HCT116 (cell line): ENCODE measurements at regions of chr12 and their contacts with region 1.

Region 1: GRCh38 chr12:38906482-38907170 is 1.2 kb upstream of the CPNE8 start:
- DNase-seq: peak; percentile 74
- ATAC-seq: peak; percentile 73
- H3K4me3 ChIP-seq: peak overlapping the region; percentile 80 to 83
- H3K27ac ChIP-seq: peak overlapping the region; percentile 95
- H3K4me1 ChIP-seq: peaks cover 7 to 27% of the 10 kb centered on the region in 2 experiments
- H3K27me3 ChIP-seq: no peaks in the 10 kb centered on the region
- CTCF ChIP-seq: peak; percentile 61 to 94 (median 82)
- POLR2A ChIP-seq: no peak
- RAD21 ChIP-seq: peak; percentile 72

Region 2: DNA sequence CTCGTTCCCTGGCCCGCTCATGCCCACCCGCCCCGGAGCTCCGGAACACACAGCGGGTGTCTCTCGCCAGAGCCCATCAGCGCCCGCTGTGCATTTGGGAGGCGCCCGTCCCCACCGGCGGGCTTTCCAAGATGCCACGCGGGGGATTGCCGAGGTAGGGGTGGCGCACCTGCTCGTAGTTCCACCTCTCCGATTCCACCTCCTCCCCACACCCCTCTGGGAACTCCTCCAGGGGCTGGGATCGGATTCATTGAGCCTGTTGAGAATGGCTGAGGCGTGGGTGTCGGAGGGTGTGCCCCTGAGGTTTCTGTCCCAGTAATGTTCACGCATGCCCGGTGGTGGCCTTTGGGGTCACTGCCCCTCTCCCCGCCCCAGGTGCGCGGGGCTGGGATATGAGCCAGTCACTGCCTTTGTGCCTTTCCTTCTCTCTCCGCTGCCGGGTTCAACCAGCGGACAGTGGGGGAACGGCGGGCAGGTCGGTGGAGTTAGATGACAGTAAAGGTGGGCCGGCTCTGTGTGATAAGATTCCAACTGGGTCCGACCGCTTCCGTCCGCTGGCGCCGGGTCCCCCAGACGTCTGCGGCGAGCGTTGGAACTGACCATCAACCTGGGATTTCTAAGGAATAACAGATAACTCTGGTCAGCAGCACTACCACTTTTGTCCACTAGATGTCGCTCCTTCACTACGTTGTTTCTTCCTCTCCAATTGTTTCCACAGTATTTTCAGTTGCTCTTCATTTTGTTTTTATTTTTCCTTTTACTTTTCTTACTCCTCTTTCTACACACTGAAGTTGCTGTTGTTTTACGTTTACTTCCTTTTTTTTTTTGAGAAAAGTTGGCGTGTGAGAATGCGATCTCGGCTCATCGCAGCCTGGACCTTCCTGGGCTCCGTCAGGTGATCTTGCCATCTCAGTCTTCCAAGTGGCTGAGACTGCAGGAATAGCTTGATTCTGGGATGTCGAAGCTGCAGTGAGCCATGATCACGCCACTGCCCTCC is 768.1 kb before region 1 on chr12:
- CTCF ChIA-PET with region 1: no interaction called
- POLR2A ChIA-PET with region 1: no interaction called
- RAD21 ChIA-PET with region 1: no interaction called
- intact Hi-C with region 1: loop called (anchors 5 kb)
- DNase-seq: peak; percentile 61
- ATAC-seq: peak; percentile 91
- H3K4me3 ChIP-seq: peak overlapping the region; percentile 45 to 63
- H3K27ac ChIP-seq: peak overlapping the region; percentile 26; the same call in 1 of the 2 replicates
- H3K4me1 ChIP-seq: peaks cover 0 to 5% of the 10 kb centered on the region in 2 experiments; a peak in 1 of 4 replicates
- H3K27me3 ChIP-seq: no peaks in the 10 kb centered on the region
- CTCF ChIP-seq: peak; percentile 83 to 97 (median 85)
- POLR2A ChIP-seq: no peak
- RAD21 ChIP-seq: peak; percentile 90

Region 3: DNA sequence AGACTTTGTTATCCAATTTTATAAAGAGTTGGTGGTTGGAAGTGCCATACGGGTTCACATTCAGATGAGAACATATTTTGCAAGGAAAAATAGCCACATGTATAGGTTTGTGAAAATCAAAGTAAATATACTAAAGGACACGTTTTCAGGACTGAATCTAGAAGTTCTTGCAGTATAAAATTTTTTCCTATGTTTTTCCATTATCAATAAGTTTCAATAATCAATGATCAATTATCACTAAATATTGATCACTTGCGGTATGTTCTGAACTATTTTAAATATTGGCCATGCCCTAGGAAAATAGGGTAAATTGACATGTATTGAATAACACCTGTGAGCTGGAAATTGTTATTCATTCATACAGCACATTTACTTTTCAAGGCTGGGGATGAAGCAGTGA is 564.2 kb before region 1 on chr12:
- CTCF ChIA-PET with region 1: no interaction called
- POLR2A ChIA-PET with region 1: no interaction called
- RAD21 ChIA-PET with region 1: no interaction called
- intact Hi-C with region 1: loop called (anchors 5 kb)
- DNase-seq: no peak
- ATAC-seq: no peak
- H3K4me3 ChIP-seq: no peak overlapping the region
- H3K27ac ChIP-seq: no peak overlapping the region
- H3K4me1 ChIP-seq: no peaks in the 10 kb centered on the region
- H3K27me3 ChIP-seq: no peaks in the 10 kb centered on the region
- CTCF ChIP-seq: no peak
- POLR2A ChIP-seq: no peak
- RAD21 ChIP-seq: no peak

Region 4: DNA sequence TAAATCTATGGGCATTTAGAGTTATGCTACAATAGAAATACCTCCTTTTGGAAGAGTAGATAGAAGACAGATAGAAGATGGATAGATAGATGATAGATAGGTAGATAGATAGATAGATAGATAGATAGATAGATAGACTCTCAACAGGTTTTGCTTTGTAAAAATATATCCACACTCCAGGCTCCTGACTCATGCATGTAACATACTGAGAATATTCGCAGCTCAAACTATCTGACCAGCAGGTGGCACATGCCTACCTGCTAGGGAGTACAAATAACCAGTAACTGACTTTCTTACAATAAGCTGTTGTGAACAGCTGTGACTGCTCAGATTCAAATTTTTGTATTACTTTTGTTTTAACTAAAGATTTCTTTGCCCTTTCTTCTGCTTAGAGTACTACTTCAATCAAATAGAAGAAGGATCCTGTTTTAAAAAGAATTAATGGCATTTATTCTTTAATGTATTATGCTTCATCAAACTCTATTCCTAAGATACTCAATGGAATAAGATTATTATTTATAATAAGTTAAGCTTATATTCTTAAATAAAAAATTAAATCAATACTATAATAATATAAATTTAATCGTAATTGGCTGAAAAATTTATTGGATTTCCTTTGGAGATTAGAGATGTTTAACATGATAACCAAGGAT is 14.5 kb after region 1 on chr12:
- CTCF ChIA-PET with region 1: interaction called, 33 read pairs
- POLR2A ChIA-PET with region 1: no interaction called
- RAD21 ChIA-PET with region 1: interaction called, 4 read pairs
- intact Hi-C with region 1: no loop called
- DNase-seq: peak; percentile 69
- ATAC-seq: peak; percentile 90
- H3K4me3 ChIP-seq: no peak overlapping the region
- H3K27ac ChIP-seq: no peak overlapping the region
- H3K4me1 ChIP-seq: no peaks in the 10 kb centered on the region
- H3K27me3 ChIP-seq: no peaks in the 10 kb centered on the region
- CTCF ChIP-seq: peak; percentile 64 to 80 (median 70); a peak in 5 of 6 replicates
- POLR2A ChIP-seq: no peak
- RAD21 ChIP-seq: peak; percentile 76

Region 5: GRCh38 chr12:39272871-39273770 is 366.5 kb after region 1 on chr12:
- CTCF ChIA-PET with region 1: interaction called, 22 read pairs
- POLR2A ChIA-PET with region 1: no interaction called
- RAD21 ChIA-PET with region 1: no interaction called
- intact Hi-C with region 1: loop called (anchors 2 kb)
- DNase-seq: peak; percentile 22
- ATAC-seq: peak; percentile 61; the same call in 1 of the 2 replicates
- H3K4me3 ChIP-seq: no peak overlapping the region
- H3K27ac ChIP-seq: no peak overlapping the region
- H3K4me1 ChIP-seq: no peaks in the 10 kb centered on the region
- H3K27me3 ChIP-seq: no peaks in the 10 kb centered on the region
- CTCF ChIP-seq: peak; percentile 35 to 74 (median 60); a peak in 5 of 6 replicates
- POLR2A ChIP-seq: no peak
- RAD21 ChIP-seq: peak; percentile 70